GM12878 (cell line): ENCODE measurements at regions of chr2 and their contacts with region 1.

Region 1: GRCh38 chr2:232449964-232450363 is 6.0 kb upstream of the ALPI start:
- DNase-seq: no peak
- ATAC-seq: no peak; the same call in 2 of the 3 replicates
- H3K4me3 ChIP-seq: no peak overlapping the region
- H3K27ac ChIP-seq: no peak overlapping the region
- H3K4me1 ChIP-seq: no peaks in the 10 kb centered on the region
- H3K27me3 ChIP-seq: no peaks in the 10 kb centered on the region
- CTCF ChIP-seq: no peak
- EP300 ChIP-seq: no peak
- POLR2A ChIP-seq: no peak
- RAD21 ChIP-seq: no peak

Region 2: DNA sequence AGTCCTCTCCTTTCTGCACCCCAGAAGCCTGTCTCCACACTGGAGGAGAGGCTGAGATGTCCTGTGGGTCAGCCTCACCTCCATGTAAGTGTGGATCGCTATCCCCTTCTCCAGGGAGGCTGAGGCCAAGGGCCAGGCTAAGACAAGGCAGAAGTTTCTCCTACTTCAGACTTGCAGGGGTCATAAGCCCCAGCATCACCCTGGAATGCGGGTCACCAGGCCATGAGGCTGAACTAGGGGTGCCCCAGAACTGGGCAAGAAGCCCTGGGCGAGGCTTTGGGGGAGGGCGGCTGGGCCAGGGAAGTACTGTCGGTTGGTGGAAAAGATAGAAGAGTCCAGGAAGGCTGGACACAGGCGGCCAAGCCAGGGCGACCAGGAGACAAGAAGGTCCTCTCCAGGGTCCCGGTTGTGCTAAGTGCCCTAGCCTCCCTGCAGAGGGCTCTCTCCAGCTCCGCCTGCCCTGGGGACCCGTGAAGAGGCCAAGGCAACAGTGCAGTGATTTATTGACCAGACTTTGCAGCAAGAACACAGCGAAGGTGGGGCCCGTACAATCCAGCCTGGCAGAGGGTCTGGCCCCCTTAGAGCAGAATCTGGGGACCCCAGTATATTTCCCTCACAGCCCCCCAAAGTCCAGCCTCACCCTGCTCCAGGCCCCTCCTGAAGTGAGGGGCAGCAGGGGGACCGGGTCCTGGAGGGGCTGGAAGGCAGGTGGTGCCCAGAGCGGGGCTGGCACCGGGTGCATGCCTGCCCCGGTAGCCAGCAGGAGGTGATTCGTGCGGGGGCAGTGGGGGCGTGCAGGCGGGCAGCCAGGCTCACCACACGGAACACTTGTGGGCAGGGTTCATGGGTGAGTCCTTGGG is 29.6 kb after region 1 on chr2:
- CTCF ChIA-PET with region 1: no interaction called
- POLR2A ChIA-PET with region 1: no interaction called
- RAD21 ChIA-PET with region 1: no interaction called
- SMC1A ChIA-PET with region 1: no interaction called
- in situ Hi-C with region 1: no loop called
- intact Hi-C with region 1: no loop called
- DNase-seq: no peak
- ATAC-seq: no peak; the same call in 2 of the 3 replicates
- H3K4me3 ChIP-seq: no peak overlapping the region
- H3K27ac ChIP-seq: no peak overlapping the region
- H3K4me1 ChIP-seq: no peaks in the 10 kb centered on the region
- H3K27me3 ChIP-seq: peaks cover 0 to 1% of the 10 kb centered on the region in 2 experiments; a peak in 2 of 4 replicates
- CTCF ChIP-seq: no peak
- EP300 ChIP-seq: no peak
- POLR2A ChIP-seq: no peak
- RAD21 ChIP-seq: no peak

Region 3: DNA sequence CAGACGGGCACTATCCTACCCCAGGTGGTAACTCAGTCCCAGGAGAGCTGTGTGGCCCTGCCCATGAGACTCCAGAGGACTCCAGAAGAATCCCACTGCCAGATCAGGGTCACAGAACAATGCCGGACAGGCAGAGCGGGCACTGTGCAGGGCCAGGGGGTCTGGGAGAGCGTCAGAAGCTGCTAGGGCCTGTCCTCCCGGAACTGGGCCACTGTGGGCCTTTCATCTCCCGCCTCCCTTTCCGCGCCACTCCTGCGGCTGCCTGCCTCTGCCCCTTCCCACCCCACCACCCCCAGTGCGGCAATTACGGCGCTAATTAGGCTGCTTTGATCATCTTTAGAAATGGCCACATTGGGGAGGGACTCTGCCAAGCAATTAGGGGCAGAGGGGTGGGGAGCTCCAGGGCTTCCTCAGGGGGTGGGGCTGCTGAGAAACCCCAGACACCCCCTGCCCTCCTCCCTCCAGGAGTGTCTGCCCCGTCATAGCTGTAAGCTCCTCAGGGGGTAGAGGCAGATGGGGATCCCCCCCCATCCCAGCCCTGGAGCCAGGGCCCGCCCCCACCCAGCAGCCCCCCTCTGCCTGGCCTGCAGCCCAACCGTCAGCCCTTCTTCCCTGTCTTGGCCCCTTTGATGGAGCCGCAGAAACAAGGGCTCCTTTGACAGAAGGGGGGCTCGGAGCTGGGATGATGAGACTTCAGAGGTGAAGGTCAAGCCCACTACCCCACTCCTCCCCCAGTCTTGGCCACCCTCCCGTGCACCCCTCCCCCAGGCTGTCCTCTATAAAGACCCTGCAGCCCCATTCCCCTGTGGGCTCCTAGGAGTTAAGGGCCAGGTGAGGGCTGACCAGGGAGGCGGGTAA is 69.8 kb after region 1 on chr2 and contains the start of gene PRSS56:
- CTCF ChIA-PET with region 1: interaction called, 4 read pairs
- POLR2A ChIA-PET with region 1: no interaction called
- RAD21 ChIA-PET with region 1: no interaction called
- SMC1A ChIA-PET with region 1: no interaction called
- in situ Hi-C with region 1: no loop called
- intact Hi-C with region 1: loop called (anchors 5 kb)
- DNase-seq: no peak
- ATAC-seq: no peak
- H3K4me3 ChIP-seq: no peak within 1 kb of the TSS
- H3K27ac ChIP-seq: no peak within 1 kb of the TSS
- H3K4me1 ChIP-seq: no peaks in the 10 kb centered on the region
- H3K27me3 ChIP-seq: peaks cover 3 to 6% of the 10 kb centered on the region in 2 experiments; a peak in 3 of 4 replicates
- CTCF ChIP-seq: no peak
- EP300 ChIP-seq: no peak
- POLR2A ChIP-seq: no peak
- RAD21 ChIP-seq: no peak
- polyA plus RNA-seq, gene PRSS56: not detected

Region 4: DNA sequence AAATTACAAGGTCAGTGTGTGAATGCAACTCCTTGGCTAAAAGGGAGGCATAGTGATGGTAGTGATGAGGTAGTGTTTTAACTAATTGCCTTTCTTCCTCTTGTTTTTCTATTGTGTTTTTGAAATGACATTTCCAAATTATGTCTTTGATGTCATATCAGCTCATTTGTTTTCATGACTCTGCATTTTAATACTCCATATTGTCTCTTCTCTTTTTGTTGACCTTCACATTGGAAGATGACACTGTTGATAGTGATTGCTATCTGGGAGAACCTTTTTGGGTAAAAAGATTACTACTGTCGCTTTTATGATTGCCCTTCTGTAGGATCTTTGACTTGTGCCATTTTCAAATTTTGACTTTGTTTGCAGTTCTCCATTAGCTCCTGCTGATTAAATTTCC is 250.2 kb after region 1 on chr2:
- CTCF ChIA-PET with region 1: no interaction called
- POLR2A ChIA-PET with region 1: no interaction called
- RAD21 ChIA-PET with region 1: no interaction called
- SMC1A ChIA-PET with region 1: no interaction called
- in situ Hi-C with region 1: no loop called
- intact Hi-C with region 1: no loop called
- DNase-seq: no peak
- ATAC-seq: no peak
- H3K4me3 ChIP-seq: 0 out of 2 replicates have a peak overlapping the region, but pooled peaks have one; percentile 2
- H3K27ac ChIP-seq: no peak overlapping the region
- H3K4me1 ChIP-seq: peaks cover 4% of the 10 kb centered on the region; the same call in 1 of the 2 replicates
- H3K27me3 ChIP-seq: no peaks in the 10 kb centered on the region
- CTCF ChIP-seq: no peak
- EP300 ChIP-seq: no peak
- POLR2A ChIP-seq: no peak
- RAD21 ChIP-seq: no peak